ENCODE measurements at regions of chr6 and their contacts with region 1.

Region 1: GRCh38 chr6:33585403-33586107 is 5.5 kb upstream of the BAK1 start:
- DNase-seq: peak; percentile 89
- H3K4me3 ChIP-seq: peak overlapping the region in 1 of 2 experiments; percentile 35; a peak in 2 of 4 replicates
- H3K27ac ChIP-seq: no peak overlapping the region
- H3K4me1 ChIP-seq: peaks cover 7 to 19% of the 10 kb centered on the region in 2 experiments; a peak in 3 of 4 replicates
- H3K27me3 ChIP-seq: no peaks in the 10 kb centered on the region
- CTCF ChIP-seq: peak; percentile 95
- EP300 ChIP-seq: no peak
- RAD21 ChIP-seq: peak; percentile 91

Region 2: DNA sequence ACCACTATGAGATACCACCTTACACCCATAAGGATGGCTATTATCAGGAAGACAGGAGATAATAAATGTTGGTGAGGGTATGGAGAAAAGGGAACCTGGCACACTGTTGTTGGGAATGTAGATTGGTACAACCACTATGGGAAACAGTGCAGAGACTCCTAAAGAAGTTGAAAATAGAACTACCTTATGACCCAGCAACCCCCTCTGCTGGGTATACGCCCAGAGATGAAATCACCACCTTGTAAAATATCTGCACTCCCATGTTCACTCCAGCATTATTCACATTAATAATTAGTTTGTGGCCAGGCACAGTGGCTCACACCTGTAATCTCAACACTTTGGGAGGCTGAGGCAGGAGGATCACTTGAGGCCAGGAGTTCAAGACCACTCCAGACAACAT is 104.4 kb before region 1 on chr6:
- CTCF ChIA-PET with region 1: no interaction called
- POLR2A ChIA-PET with region 1: no interaction called
- DNase-seq: no peak
- H3K4me3 ChIP-seq: no peak overlapping the region
- H3K27ac ChIP-seq: no peak overlapping the region
- H3K4me1 ChIP-seq: no peaks in the 10 kb centered on the region
- H3K27me3 ChIP-seq: peaks cover 10% of the 10 kb centered on the region; the same call in 1 of the 2 replicates
- CTCF ChIP-seq: no peak
- EP300 ChIP-seq: no peak
- RAD21 ChIP-seq: no peak

Region 3: GRCh38 chr6:33620856-33621710 is 35.5 kb after region 1 on chr6 and contains the start of gene ITPR3:
- CTCF ChIA-PET with region 1: interaction called, 16 read pairs
- POLR2A ChIA-PET with region 1: no interaction called
- DNase-seq: peak; percentile 86
- H3K4me3 ChIP-seq: peak within 1 kb of the TSS; percentile 57 to 76
- H3K27ac ChIP-seq: peak within 1 kb of the TSS in 1 of 2 experiments; percentile 45; a peak in 3 of 4 replicates
- H3K4me1 ChIP-seq: peaks cover 0 to 19% of the 10 kb centered on the region in 2 experiments; a peak in 1 of 4 replicates
- H3K27me3 ChIP-seq: no peaks in the 10 kb centered on the region
- CTCF ChIP-seq: no peak
- EP300 ChIP-seq: no peak
- RAD21 ChIP-seq: no peak
- polyA plus RNA-seq, gene ITPR3: 4.7 and 8.1 TPM in 2 replicates

Region 4: GRCh38 chr6:33685411-33686224 is 100.1 kb after region 1 on chr6:
- CTCF ChIA-PET with region 1: interaction called, 10 read pairs
- POLR2A ChIA-PET with region 1: no interaction called
- DNase-seq: peak; percentile 23
- H3K4me3 ChIP-seq: no peak overlapping the region
- H3K27ac ChIP-seq: no peak overlapping the region
- H3K4me1 ChIP-seq: no peaks in the 10 kb centered on the region; a peak in 1 of 4 replicates
- H3K27me3 ChIP-seq: no peaks in the 10 kb centered on the region
- CTCF ChIP-seq: no peak
- EP300 ChIP-seq: no peak
- RAD21 ChIP-seq: no peak

Region 5: DNA sequence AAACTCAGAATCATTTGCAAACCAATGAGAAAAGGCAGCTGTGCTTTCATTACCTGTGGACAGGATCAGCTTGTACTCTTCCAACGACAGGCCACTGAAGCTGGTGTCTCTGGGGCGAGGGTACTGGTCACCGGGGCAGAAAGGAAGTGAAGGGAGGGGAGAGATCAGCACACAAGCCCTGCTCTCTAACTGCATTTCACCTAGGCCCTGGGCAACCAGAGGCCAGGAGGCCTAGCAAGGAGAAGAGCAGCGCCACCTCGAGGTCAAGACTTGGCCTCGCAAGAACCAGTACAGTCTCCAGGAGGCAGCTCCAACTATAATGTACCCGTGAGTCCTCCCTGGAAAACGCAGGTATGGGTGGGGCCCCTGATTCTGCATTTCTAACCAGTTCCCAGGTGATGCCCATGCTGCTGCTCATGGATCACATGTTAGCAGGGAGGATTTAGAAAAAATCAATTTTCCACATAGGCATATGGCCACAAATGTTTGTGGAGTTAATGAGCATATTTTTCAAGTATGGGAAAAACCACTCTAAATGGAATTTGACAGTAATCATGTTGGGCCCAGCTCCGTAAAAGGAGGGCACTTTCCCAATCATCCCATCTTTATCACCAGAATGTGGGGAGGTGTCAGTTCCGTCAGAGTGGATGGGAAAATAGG is 115.0 kb after region 1 on chr6:
- CTCF ChIA-PET with region 1: interaction called, 188 read pairs
- POLR2A ChIA-PET with region 1: interaction called, 3 read pairs
- DNase-seq: peak; percentile 62
- H3K4me3 ChIP-seq: no peak overlapping the region; a peak in 1 of 4 replicates
- H3K27ac ChIP-seq: no peak overlapping the region; a peak in 1 of 4 replicates
- H3K4me1 ChIP-seq: peaks cover 20 to 34% of the 10 kb centered on the region in 2 experiments; a peak in 3 of 4 replicates
- H3K27me3 ChIP-seq: no peaks in the 10 kb centered on the region
- CTCF ChIP-seq: peak; percentile 76
- EP300 ChIP-seq: no peak
- RAD21 ChIP-seq: peak; percentile 78